PC-9 (cell line): ENCODE measurements at regions of chr10 and their contacts with region 1.

Region 1: GRCh38 chr10:127863231-127863825 is 29.4 kb downstream of the CLRN3 start:
- DNase-seq: no peak
- H3K4me3 ChIP-seq: no peak overlapping the region
- H3K27ac ChIP-seq: no peak overlapping the region
- H3K4me1 ChIP-seq: no peaks in the 10 kb centered on the region
- H3K27me3 ChIP-seq: peaks cover 46% of the 10 kb centered on the region
- CTCF ChIP-seq: no peak

Region 2: DNA sequence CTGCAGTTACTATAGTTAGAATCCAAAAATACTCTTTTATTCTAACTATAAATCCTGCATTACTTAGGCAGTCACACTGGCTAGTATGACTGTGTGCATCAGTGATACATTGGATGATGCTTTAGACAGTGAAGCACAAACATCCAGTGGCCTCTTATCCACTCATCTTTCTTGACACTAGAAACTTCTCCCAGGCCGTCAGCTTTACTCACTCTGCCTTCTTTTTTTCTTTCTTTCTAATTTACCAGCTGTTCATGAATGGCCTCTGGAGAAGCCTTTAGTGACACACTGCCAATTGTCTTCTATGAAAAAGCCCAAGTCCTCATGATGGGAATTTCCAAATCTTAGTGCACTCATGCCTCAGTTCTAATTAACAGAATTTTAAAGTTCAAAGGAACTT is 1166.6 kb before region 1 on chr10:
- CTCF ChIA-PET with region 1: no interaction called
- POLR2A ChIA-PET with region 1: interaction called, 10 read pairs
- intact Hi-C with region 1: no loop called
- DNase-seq: no peak
- H3K4me3 ChIP-seq: no peak overlapping the region
- H3K27ac ChIP-seq: no peak overlapping the region
- H3K4me1 ChIP-seq: no peaks in the 10 kb centered on the region
- H3K27me3 ChIP-seq: no peaks in the 10 kb centered on the region
- CTCF ChIP-seq: no peak

Region 3: DNA sequence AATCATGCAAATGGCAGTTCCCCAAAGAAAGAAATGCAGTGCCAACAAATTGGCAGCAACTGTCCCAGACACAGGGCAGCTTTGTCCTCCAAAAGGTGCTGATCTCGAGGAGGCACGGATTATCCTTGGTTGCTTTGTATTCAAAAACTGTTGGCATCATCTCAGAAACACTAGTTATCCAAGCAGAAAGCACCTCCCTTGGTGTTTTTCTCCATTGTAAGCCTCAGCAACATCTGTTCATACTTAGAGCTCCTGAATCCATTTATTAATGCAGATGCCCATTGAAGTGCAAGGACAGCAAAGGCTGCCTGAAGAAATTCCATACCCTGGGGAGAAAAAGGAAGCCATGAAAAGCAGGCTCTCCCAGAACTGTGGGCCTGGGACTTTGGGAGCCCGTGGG is 315.3 kb before region 1 on chr10:
- CTCF ChIA-PET with region 1: no interaction called
- POLR2A ChIA-PET with region 1: no interaction called
- intact Hi-C with region 1: no loop called
- DNase-seq: no peak
- H3K4me3 ChIP-seq: no peak overlapping the region
- H3K27ac ChIP-seq: no peak overlapping the region
- H3K4me1 ChIP-seq: no peaks in the 10 kb centered on the region
- H3K27me3 ChIP-seq: peaks cover 8% of the 10 kb centered on the region
- CTCF ChIP-seq: no peak

Region 4: DNA sequence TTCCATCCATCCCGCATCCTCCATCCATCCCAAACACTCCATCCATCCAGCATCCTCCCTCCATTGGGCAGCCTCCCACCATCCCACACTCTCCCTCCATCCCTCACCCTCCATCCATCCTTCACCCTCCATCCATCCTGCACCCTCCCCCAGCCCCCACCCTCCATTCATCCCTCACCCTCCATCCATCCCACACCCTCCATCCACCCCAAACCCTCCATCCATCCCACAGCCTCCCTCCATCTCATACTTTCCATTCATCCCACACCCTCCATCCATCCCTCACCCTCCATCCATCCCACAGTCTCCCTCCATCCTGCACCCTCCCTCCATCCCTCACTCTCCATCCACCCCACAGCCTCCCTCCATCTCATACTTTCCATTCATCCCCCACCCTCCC is 66.0 kb before region 1 on chr10:
- CTCF ChIA-PET with region 1: no interaction called
- POLR2A ChIA-PET with region 1: no interaction called
- intact Hi-C with region 1: no loop called
- DNase-seq: no peak
- H3K4me3 ChIP-seq: no peak overlapping the region
- H3K27ac ChIP-seq: no peak overlapping the region
- H3K4me1 ChIP-seq: no peaks in the 10 kb centered on the region
- H3K27me3 ChIP-seq: no peaks in the 10 kb centered on the region
- CTCF ChIP-seq: no peak

Region 5: GRCh38 chr10:128186959-128187787 is 323.8 kb after region 1 on chr10:
- CTCF ChIA-PET with region 1: no interaction called
- POLR2A ChIA-PET with region 1: no interaction called
- intact Hi-C with region 1: no loop called
- DNase-seq: no peak
- H3K4me3 ChIP-seq: no peak overlapping the region
- H3K27ac ChIP-seq: no peak overlapping the region
- H3K4me1 ChIP-seq: no peaks in the 10 kb centered on the region
- H3K27me3 ChIP-seq: peaks cover 28% of the 10 kb centered on the region; the same call in 1 of the 2 replicates
- CTCF ChIP-seq: no peak